ENCODE measurements at regions of chr3 and their contacts with region 1.

Region 1: DNA sequence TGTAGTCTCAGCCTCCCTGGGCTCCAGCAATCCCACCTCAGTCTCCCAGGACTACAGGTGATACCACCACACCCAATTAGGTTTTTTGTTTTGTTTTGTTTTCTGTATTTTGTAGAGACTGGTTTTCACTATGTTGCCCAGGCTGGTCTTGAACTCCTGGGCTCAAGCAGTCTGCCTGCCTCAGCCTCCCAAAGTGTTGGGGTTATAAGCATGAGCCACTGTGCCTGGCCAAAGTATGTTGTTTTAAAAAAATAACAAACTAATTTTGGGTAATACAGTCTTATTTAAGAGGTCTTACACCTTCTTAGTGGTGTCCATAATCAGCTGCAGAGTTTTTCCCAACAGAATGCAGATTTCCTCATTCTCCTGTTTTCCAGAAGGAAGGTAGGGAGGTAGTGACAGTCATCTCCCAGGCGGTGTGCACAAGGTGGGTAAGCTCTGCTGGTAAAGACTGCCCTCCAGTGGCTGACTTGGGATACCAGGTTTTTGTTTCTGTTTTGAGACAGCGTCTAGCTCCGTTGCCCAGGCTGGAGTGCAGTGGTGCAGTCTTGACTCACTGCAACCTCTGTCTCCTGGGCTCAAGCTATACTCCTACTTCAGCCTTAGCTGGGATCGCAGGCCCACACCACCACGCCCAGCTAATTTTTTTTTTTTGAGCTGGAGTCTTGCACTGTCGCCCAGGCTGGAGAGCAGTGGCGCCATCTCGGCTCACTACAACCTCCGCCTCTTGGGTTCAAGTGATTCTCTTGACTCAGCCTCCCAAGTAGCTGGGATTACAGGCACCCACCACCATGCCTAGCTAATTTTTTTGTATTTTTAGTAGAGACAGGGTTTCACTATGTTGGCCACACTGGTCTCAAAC is 58.4 kb downstream of the MAP6D1 start:
- DNase-seq: peak; percentile 82

Region 2: DNA sequence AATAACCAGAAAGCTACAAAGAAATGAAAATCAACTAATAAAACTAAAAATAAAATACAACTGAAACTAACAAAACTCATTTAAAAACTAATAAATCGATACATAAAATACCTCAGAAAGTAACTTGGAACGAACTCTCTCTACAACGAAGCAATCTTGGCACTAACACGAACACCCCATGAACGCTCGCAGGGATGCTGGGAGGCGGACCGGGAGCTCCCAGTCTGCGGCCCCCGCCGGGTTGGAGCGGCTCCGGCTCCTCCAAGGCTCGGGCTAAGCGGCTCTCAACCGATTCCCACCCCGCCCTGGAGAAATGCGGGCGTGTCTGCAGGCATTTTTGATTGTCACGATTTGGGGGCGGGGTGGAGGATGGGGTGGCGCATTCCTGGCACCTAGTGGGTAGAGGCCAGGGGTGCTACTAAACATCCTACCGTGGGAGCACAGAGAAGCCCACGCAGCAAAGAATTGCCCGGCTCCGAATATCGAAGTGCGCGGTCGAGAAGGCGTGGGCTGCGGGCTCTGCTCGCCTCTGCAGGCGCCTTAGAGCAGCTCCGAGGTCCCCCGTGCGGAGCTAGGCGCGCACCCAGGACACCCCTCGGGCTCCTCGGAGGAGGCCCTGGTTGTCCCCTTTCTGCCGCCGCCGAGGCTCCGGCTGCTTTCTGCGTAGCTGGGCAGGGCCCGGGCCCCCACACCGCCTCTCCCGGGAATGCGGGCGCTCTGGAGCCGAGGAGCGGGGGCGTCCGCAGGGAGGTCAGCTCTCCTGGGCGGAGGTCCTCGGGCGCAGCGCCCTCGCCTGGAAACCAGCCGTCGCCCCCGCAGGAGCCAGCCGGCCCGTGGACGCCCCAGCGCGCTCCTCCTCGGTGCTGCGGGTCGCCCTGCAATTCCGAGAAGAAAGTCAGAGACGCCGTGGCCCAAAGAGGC is 588.1 kb before region 1 on chr3:
- intact Hi-C with region 1: loop called (anchors 10 kb)
- DNase-seq: no peak

Region 3: DNA sequence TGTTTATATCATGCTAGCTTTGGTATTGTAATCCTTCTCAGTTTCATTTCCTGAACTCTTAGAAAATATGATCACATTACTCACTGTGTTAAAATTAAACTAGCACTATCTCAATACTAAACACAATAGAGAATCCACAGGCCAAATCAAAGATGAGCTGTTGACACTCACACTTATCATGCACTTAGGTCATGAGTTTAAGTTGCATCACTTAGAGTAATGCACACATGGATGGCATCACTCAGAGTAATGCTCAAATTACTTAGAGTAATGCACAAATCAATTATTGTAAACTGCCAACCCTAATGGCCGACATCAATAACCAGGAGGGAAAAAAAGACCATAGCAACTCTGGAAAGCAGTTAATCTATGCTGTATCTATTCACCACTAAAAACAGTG is 298.6 kb before region 1 on chr3:
- intact Hi-C with region 1: loop called (anchors 2 kb)
- DNase-seq: no peak

Region 4: GRCh38 chr3:183500319-183500718 is 266.7 kb before region 1 on chr3:
- intact Hi-C with region 1: loop called (anchors 2 kb)
- DNase-seq: no peak

Region 5: DNA sequence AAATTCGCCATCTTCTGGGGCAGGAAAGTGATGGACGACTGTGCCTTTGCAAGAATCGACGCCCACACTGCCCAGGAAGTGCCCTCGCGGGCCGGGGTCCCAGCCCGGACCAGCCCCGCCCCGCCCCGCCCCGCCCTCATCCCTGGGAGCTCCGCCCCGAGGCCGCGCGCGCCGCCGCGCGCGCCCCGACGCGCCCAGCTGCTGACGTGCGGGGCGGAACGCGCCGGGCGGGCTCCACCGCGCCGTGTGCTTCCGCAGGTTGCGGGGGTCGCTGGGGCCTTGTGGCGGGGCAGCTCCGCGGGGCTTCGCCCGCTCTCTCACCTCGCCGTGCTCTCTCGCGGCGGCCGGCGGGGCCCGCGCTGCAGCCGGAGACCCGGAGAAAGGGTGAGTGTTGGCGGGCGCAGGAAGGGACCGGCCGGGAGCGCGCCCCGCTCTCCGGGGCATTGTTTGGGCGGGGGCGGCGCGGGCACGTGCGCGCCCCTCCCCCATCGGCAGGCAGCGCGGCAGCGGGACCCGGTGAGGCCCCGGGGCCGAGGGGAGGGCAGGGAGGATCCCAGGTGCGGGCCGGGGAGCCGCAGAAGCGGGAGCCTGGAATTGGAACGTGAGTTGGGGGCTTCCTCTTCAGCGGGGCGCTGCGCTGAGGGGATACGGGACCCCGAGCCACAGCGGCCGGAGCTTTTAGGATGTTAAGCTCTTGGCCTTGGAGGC is 69.2 kb before region 1 on chr3 and contains the start of gene YEATS2:
- intact Hi-C with region 1: loop called (anchors 5 kb)
- DNase-seq: peak; percentile 78
- total RNA-seq, gene YEATS2: 15.5 TPM

Region 6: DNA sequence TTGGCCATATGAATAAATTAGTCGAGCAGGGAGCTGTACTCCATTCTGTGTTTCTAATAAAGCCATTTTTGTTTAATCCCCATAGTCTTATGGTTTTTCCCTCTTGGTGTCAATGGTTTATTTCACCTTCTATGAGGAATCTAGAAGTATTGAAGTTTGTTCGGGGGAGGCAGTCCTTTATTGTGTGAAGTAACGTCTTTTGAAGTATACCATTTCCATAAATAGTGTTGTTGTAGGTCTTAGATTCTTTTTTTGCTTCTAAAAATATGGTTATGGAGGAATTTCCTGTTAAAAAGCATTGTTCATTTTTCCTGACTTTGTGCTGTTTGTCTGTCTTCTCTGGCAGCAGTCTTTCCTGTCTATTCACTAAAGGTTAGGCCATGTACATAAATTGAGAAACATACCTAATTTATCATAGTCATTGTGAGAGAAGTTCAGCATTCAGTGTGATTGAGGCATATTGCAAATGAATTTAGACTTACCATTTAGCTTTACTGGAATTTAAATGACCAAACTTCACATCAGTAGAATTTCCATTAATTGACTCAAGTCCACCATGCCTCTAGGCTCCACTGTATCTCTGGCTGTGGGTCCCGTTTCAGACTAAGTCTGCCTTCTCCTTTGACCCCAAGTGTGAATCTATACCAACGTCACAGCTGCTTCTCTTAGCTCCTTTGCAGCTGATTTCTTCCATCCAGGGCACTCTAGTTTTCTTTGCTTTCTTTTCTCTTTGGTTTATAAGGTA is 32.1 kb before region 1 on chr3:
- intact Hi-C with region 1: loop called (anchors 5 kb)
- DNase-seq: no peak